ENCODE measurements at regions of chr12 and their contacts with region 1.

Region 1: GRCh38 chr12:19439059-19440018 is at the start of gene AEBP2:
- DNase-seq: peak; percentile 89
- H3K4me3 ChIP-seq: peak within 1 kb of the TSS; percentile 95 to 96 (median 95)
- H3K27ac ChIP-seq: peak within 1 kb of the TSS; percentile 63
- H3K4me1 ChIP-seq: peaks cover 3% of the 10 kb centered on the region
- H3K27me3 ChIP-seq: no peaks in the 10 kb centered on the region
- CTCF ChIP-seq: no peak
- total RNA-seq, gene AEBP2: 19.7 to 35.4 TPM

Region 2: DNA sequence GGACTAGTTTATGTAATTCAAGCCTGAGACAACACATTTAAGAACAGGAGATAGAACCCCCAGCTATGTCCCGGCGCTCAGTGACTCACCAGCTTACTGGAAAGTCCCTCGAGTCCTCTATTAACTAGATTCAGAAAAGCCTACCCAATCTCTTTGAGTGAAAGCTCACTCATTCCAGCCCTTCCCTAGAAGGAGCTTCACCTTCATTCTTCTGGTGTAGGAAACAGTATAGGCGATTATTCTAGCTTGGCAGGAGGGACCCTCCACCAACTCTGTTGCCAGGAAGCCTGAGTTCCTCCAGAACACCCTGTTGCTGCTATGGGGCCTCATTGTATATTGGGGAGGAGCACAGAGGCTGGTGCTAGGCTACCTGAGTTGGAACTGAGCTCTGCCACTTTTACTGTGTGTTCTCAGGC is 57.2 kb before region 1 on chr12:
- CTCF ChIA-PET with region 1: interaction called, 3 read pairs
- dilution Hi-C with region 1: no loop called
- in situ Hi-C with region 1: no loop called
- intact Hi-C with region 1: loop called (anchors 5 kb)
- DNase-seq: peak; percentile 86
- H3K4me3 ChIP-seq: no peak overlapping the region
- H3K27ac ChIP-seq: peak overlapping the region; percentile 56
- H3K4me1 ChIP-seq: peaks cover 15% of the 10 kb centered on the region
- H3K27me3 ChIP-seq: no peaks in the 10 kb centered on the region
- CTCF ChIP-seq: no peak

Region 3: DNA sequence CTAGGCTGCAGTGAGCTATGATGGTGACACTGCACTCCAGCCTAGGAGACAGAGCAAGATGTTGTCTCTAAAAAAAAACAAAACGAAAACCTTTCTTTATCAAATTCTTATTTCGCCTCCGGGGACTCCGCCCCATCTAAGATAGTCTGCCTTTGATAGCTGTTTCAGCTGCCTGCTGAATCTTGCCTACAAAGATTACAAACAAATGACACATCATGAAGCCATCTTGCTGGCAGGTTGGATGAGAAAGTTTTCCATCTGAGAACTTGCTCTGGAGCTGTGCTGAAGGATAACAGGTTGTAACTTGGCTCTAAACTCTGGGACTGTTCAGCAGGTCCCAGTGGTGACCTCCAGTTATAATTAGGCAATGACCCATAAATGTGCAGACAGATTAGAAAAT is 41.8 kb before region 1 on chr12:
- CTCF ChIA-PET with region 1: no interaction called
- dilution Hi-C with region 1: no loop called
- in situ Hi-C with region 1: no loop called
- intact Hi-C with region 1: loop called (anchors 2 kb)
- DNase-seq: peak; percentile 88
- H3K4me3 ChIP-seq: no peak overlapping the region
- H3K27ac ChIP-seq: no peak overlapping the region
- H3K4me1 ChIP-seq: peaks cover 7% of the 10 kb centered on the region
- H3K27me3 ChIP-seq: no peaks in the 10 kb centered on the region
- CTCF ChIP-seq: no peak

Measured in mammary epithelial cell (primary cell).